ENCODE measurements at regions of chr1 and their contacts with region 1.

Region 1: GRCh38 chr1:904310-904950 is 19.3 kb upstream of the SAMD11 start:
- DNase-seq: peak; percentile 78
- ATAC-seq: peak; percentile 62
- H3K4me3 Mint-ChIP-seq: peak overlapping the region; percentile 45
- H3K27ac Mint-ChIP-seq: no peak overlapping the region
- H3K4me1 Mint-ChIP-seq: peaks cover 7% of the 10 kb centered on the region
- H3K27me3 Mint-ChIP-seq: peaks cover 64% of the 10 kb centered on the region
- CTCF ChIP-seq: peak; percentile 95

Region 2: GRCh38 chr1:921011-921837 is 16.8 kb after region 1 on chr1:
- CTCF ChIA-PET with region 1: interaction called, 27 read pairs
- POLR2A ChIA-PET with region 1: interaction called, 3 read pairs
- DNase-seq: peak; percentile 75
- ATAC-seq: peak; percentile 60
- H3K4me3 Mint-ChIP-seq: peak overlapping the region; percentile 12; the same call in 1 of the 2 replicates
- H3K27ac Mint-ChIP-seq: no peak overlapping the region
- H3K4me1 Mint-ChIP-seq: peaks cover 16% of the 10 kb centered on the region
- H3K27me3 Mint-ChIP-seq: peaks cover 85% of the 10 kb centered on the region
- CTCF ChIP-seq: no peak

Region 3: GRCh38 chr1:928825-929661 is 24.6 kb after region 1 on chr1:
- CTCF ChIA-PET with region 1: interaction called, 20 read pairs
- POLR2A ChIA-PET with region 1: no interaction called
- DNase-seq: no peak
- ATAC-seq: no peak
- H3K4me3 Mint-ChIP-seq: no peak overlapping the region
- H3K27ac Mint-ChIP-seq: no peak overlapping the region
- H3K4me1 Mint-ChIP-seq: peaks cover 7% of the 10 kb centered on the region; the same call in 1 of the 2 replicates
- H3K27me3 Mint-ChIP-seq: peaks cover 92% of the 10 kb centered on the region
- CTCF ChIP-seq: no peak

Region 4: GRCh38 chr1:941588-942383 is 37.4 kb after region 1 on chr1:
- CTCF ChIA-PET with region 1: interaction called, 40 read pairs
- POLR2A ChIA-PET with region 1: interaction called, 3 read pairs
- DNase-seq: peak; percentile 70
- ATAC-seq: peak; percentile 16
- H3K4me3 Mint-ChIP-seq: peak overlapping the region; percentile 70
- H3K27ac Mint-ChIP-seq: no peak overlapping the region
- H3K4me1 Mint-ChIP-seq: peaks cover 6% of the 10 kb centered on the region
- H3K27me3 Mint-ChIP-seq: peaks cover 56% of the 10 kb centered on the region
- CTCF ChIP-seq: no peak

Region 5: DNA sequence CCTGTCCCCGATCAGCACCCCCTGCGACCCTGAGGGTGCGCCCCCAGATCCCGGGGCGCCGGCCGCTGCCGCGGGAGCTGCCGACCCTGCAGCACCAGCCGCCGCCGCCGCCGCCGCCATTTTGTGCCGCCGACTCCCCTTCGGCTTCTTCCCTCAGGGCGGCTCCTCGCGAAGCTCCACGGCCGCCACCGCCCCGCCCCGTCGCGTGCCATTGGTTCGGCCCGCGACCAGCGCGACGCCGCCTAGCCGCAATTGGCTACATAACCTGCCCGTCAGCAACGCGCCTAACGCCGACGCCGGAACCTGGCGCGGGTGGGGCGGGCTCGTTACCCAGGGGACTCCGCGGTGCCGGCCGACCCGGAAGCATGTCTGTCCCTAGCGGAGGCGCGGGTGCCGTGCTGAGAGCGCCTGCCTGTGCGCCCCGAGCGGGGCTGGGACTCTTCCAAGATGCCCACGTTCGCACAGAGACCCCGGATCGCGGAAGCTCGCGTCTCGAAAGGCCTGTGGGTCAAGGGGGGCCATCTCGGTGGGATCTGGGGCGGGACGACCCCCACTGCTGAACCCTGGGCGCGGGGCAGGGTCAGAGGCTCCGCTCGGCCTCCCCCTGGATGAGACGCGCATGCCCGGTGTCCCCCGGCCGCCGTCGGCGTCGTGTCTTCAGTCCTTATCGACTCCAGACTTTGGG is 494.9 kb after region 1 on chr1 and contains the start of gene CCNL2:
- CTCF ChIA-PET with region 1: no interaction called
- POLR2A ChIA-PET with region 1: no interaction called
- DNase-seq: peak; percentile 99
- ATAC-seq: peak; percentile 94
- H3K4me3 Mint-ChIP-seq: peak within 1 kb of the TSS; percentile 85
- H3K27ac Mint-ChIP-seq: peak within 1 kb of the TSS; percentile 93
- H3K4me1 Mint-ChIP-seq: peaks cover 31% of the 10 kb centered on the region
- H3K27me3 Mint-ChIP-seq: no peaks in the 10 kb centered on the region
- CTCF ChIP-seq: no peak
- total RNA-seq, gene CCNL2: 117 to 142 TPM (median 117 TPM) in 3 replicates

Measured in WTC11 (cell line).